Stomach (tissue), 19 donors: ENCODE measurements at regions of chr6 and their contacts with region 1.

Region 1: GRCh38 chr6:52020945-52021570 is 66.4 kb downstream of the PKHD1 start:
- DNase-seq: peak in 1 of 2 donors; percentile 61
- H3K4me3 ChIP-seq: no peak overlapping the region
- H3K27ac ChIP-seq: no peak overlapping the region
- H3K4me1 ChIP-seq: peaks cover 0 to 9% (median 2%) of the 10 kb centered on the region in 4 donors
- H3K27me3 ChIP-seq: no peaks in the 10 kb centered on the region
- CTCF ChIP-seq: peak in 5 of 7 experiments; percentile 29 to 81 (median 63)
- EP300 ChIP-seq: no peak
- POLR2A ChIP-seq: no peak

Region 2: DNA sequence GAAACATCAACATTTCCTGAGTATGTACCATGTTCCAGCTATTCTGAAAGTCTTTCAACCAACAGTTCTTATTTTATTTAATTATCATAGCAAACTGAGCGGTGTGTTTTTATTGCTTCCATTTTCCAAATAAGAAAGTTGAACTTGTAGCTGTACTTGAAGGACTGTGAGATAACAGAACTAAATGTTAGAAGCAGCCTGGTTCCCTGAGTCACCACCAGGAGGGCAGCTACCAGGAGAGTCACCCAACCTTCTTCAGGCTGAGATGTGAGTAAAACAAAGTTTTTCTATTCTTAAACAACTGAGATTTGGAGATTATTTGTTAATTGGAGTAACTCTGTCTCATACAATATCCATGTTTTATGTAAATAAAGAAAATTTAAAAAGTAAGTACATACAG is 337.0 kb before region 1 on chr6:
- intact Hi-C with region 1: no loop called
- DNase-seq: no peak
- H3K4me3 ChIP-seq: no peak overlapping the region
- H3K27ac ChIP-seq: no peak overlapping the region
- H3K4me1 ChIP-seq: peaks cover 0 to 9% (median 3%) of the 10 kb centered on the region in 4 donors
- H3K27me3 ChIP-seq: no peaks in the 10 kb centered on the region
- CTCF ChIP-seq: no peak
- EP300 ChIP-seq: no peak
- POLR2A ChIP-seq: no peak

Region 3: DNA sequence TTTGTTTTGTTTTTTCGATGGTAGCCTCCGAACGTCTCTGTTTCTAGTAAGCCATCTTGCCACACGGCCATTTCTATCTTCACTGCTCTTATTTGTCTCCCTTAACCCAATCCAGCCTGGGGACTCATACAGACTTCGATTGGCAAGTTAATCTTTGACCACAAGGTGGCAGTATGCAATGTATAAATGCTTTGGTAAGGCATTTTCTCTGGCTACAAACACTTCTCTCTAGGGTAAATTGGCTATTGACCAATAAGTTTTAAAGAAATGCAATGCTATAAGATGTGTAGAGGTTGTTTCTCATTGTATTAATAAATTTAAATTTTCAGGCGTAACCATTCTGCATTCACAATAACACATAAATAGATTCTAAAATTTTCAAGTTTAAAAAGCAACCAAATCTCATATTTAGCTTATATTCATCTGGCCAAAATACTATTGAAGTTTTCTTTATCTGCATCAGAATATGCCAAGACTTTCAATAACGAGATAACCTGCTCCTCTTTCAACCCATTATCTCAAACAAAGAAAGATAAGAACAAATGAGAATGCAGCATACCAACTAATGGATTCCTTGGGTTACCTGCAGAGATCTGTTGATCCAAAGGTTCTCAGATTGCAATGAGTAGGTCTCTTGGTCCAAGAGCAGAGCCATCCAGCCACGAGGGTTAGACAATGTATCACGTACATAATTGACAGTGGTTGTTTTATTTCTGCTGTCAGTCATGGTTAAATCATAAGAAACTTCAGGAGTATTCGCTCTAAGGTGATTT is 165.6 kb before region 1 on chr6:
- intact Hi-C with region 1: loop called (anchors 10 kb)
- DNase-seq: peak in 1 of 2 donors; percentile 83
- H3K4me3 ChIP-seq: no peak overlapping the region
- H3K27ac ChIP-seq: no peak overlapping the region
- H3K4me1 ChIP-seq: peaks cover 0 to 11% (median 5%) of the 10 kb centered on the region in 4 donors
- H3K27me3 ChIP-seq: no peaks in the 10 kb centered on the region
- CTCF ChIP-seq: peak in 5 of 7 experiments; percentile 32 to 71 (median 63)
- EP300 ChIP-seq: no peak
- POLR2A ChIP-seq: no peak

Region 4: DNA sequence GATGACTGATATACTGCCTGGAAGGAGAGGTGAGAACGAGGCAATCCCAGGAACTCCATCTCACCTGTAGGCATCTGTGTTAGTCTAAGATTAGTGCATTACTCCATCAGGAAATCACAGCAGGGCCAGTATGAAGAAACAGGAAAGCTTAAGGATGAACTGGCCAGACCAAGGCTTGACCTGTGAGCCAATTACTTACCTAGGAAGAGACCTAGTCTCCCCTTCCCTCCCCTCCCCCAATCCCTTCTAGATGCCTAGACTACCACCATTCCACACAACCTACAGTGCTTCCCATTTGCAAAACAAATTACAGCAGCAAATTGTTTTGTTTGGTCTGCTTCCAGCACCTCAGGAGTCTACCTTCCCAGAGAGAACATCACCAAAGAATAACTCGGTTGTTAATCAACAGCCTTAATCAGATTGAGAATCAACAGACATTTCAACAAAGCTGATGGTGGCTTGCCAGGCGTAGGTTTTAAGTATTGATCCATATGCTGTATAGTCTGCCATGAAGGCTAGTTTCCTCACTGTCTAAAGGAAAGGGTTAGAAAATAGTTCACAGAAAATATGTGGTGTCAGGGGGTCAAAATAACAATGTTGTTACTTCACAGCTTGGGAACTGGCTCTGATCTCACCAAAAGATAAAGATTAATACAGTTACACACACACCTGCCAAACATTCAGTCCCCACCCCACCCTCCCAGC is 56.3 kb after region 1 on chr6:
- intact Hi-C with region 1: no loop called
- DNase-seq: peak in 1 of 2 donors; percentile 7
- H3K4me3 ChIP-seq: no peak overlapping the region
- H3K27ac ChIP-seq: no peak overlapping the region
- H3K4me1 ChIP-seq: no peaks in the 10 kb centered on the region
- H3K27me3 ChIP-seq: no peaks in the 10 kb centered on the region
- CTCF ChIP-seq: no peak
- EP300 ChIP-seq: no peak
- POLR2A ChIP-seq: no peak